ENCODE measurements at regions of chr11 and their contacts with region 1.

Region 1: GRCh38 chr11:118145285-118146227 is 7.1 kb downstream of the SCN4B start:
- DNase-seq: peak; percentile 97
- H3K4me3 ChIP-seq: peak overlapping the region; percentile 45
- H3K27ac ChIP-seq: no peak overlapping the region
- H3K4me1 ChIP-seq: no peaks in the 10 kb centered on the region
- H3K27me3 ChIP-seq: peaks cover 12% of the 10 kb centered on the region
- CTCF ChIP-seq: peak; percentile 80

Region 2: GRCh38 chr11:118033443-118033842 is 112.1 kb before region 1 on chr11:
- intact Hi-C with region 1: no loop called
- DNase-seq: no peak
- H3K4me3 ChIP-seq: no peak overlapping the region
- H3K27ac ChIP-seq: no peak overlapping the region
- H3K4me1 ChIP-seq: no peaks in the 10 kb centered on the region
- H3K27me3 ChIP-seq: no peaks in the 10 kb centered on the region
- CTCF ChIP-seq: no peak

Region 3: GRCh38 chr11:118076754-118077281 is 68.7 kb before region 1 on chr11 and contains the start of gene TMPRSS4:
- intact Hi-C with region 1: no loop called
- DNase-seq: peak; percentile 94
- H3K4me3 ChIP-seq: peak within 1 kb of the TSS; percentile 32
- H3K27ac ChIP-seq: peak within 1 kb of the TSS; percentile 88
- H3K4me1 ChIP-seq: peaks cover 6% of the 10 kb centered on the region
- H3K27me3 ChIP-seq: no peaks in the 10 kb centered on the region
- CTCF ChIP-seq: no peak
- total RNA-seq, gene TMPRSS4: 309 to 344 TPM

Region 4: DNA sequence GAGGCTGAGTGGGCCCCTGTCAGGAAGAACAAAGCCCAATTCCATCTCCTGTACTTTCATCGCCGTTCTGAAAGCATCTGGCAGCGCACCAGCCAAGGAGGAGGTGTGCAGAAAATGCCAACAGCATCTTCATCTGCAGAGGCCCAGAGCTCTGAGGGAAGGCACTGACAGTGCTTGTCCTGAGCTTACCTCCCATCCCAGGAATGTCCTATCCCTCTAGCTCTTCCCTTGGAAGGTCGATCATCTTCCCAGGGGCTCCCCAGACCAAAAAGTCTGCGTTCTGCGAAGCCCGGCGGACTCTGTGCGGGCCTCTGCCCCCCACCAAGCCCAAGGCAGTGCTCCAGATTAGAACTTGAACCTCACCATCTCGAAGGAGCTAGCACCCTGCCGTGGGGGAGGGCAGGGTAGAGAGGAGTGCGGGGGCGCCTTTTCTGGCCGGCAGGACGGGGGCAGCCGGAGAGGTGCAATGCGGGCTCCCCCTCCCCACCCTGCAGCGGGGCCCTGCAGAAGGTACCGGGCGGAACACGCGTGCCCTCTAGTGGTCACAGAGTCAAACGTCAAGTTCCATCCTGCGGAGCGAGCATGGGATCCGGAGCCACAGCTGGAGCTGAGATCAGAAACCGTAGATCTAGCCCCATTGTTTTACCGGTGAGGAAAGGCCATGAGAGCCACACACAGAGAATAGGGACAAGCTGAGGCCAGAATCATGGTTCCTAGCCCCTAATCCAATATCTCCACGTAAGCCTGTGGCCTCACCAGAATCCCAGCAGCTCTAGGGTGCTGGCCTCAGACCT is 25.9 kb after region 1 on chr11:
- intact Hi-C with region 1: loop called (anchors 2 kb)
- DNase-seq: peak; percentile 73
- H3K4me3 ChIP-seq: no peak overlapping the region
- H3K27ac ChIP-seq: no peak overlapping the region
- H3K4me1 ChIP-seq: no peaks in the 10 kb centered on the region
- H3K27me3 ChIP-seq: no peaks in the 10 kb centered on the region
- CTCF ChIP-seq: peak; percentile 88

Region 5: GRCh38 chr11:118290923-118291322 is 145.4 kb after region 1 on chr11:
- intact Hi-C with region 1: loop called (anchors 5 kb)
- DNase-seq: peak; percentile 75
- H3K4me3 ChIP-seq: no peak overlapping the region
- H3K27ac ChIP-seq: no peak overlapping the region
- H3K4me1 ChIP-seq: no peaks in the 10 kb centered on the region
- H3K27me3 ChIP-seq: no peaks in the 10 kb centered on the region
- CTCF ChIP-seq: peak; percentile 39

Region 6: DNA sequence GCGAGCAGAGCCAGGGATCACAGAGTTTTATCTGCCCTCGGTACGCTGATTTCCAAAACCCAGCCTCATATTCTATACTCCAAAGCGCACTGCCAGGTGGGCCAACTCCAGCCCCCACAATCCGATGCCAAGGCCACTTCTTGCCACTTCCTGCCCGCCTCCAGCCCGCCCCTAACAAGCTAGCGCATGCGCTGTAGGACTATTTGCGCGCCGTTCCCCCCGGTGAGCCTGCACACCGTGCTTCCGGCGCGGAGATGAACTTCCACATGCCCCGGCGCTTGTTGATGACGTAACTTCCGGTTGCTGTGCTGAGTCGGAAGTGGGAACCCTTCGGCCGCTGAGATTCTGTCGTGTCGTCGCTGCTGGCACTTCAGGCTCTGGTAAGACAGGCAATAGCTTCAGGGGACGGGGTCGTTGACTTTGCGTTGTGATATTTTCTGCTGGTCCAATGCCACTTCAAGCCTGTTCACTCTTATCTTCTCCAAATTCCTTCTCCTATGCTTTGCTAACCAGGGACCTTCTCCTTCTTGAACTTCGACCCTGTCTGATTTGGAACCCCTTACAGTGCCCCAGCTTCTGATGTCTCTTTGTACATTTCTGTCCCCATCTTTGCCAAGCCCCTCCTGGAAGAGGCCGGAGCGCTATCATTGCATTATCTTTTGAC is 213.9 kb after region 1 on chr11 and contains the start of gene UBE4A:
- intact Hi-C with region 1: loop called (anchors 10 kb)
- DNase-seq: peak; percentile 99
- H3K4me3 ChIP-seq: peak within 1 kb of the TSS; percentile 84
- H3K27ac ChIP-seq: peak within 1 kb of the TSS; percentile 25
- H3K4me1 ChIP-seq: peaks cover 12% of the 10 kb centered on the region
- H3K27me3 ChIP-seq: no peaks in the 10 kb centered on the region
- CTCF ChIP-seq: no peak
- total RNA-seq, gene UBE4A: 44.8 to 46.9 TPM

Region 7: GRCh38 chr11:118462178-118462577 is 316.6 kb after region 1 on chr11:
- intact Hi-C with region 1: no loop called
- DNase-seq: no peak
- H3K4me3 ChIP-seq: no peak overlapping the region
- H3K27ac ChIP-seq: no peak overlapping the region
- H3K4me1 ChIP-seq: no peaks in the 10 kb centered on the region
- H3K27me3 ChIP-seq: no peaks in the 10 kb centered on the region
- CTCF ChIP-seq: no peak